GM10248 (cell line): ENCODE measurements at regions of chr9 and their contacts with region 1.

Region 1: DNA sequence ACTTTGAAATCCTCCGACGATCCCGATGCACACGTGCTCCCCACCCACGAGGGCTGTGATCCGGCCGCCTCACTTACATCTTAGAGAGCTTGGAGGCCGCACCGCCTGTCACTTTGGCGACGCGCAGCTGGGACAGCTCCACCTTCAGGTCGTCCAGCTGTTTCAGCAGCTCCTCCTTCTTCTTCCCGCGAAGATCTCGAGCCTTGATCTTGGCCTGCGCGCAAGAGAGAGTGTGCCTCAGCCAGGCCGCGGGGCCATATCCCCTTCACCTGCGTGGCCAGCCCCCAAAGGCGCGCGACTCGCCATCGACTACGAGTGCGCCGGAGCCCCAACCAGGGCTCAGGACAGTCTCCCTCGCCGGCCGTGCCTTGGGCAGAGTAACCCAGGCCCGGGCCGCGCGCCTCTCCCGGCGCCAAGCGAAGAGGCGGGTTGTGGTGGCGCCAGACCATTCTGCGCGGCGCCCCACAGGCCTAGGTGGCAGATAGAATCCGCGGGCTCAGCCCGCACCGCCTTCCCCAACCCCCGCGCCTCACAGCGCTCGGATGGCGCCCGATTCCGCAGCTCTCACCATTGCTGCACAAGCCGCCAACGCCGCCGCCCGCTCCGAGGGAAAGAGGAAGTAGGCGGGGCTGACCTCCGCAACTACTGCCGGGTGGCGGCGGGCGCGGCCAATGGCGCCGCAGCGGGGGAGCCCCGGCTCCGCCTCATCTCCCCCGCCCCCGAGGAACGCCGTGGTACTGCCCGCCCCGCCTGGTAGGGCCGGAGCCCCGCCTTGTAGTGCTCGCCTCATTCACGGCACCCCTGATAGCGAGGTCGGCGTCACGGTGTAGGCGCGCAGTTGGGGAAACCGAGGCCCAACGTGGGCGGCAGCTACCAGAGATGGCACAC is at the starts of genes ARPC5L and RPL35:
- DNase-seq: peak; percentile 99
- CTCF ChIP-seq: no peak

Region 2: DNA sequence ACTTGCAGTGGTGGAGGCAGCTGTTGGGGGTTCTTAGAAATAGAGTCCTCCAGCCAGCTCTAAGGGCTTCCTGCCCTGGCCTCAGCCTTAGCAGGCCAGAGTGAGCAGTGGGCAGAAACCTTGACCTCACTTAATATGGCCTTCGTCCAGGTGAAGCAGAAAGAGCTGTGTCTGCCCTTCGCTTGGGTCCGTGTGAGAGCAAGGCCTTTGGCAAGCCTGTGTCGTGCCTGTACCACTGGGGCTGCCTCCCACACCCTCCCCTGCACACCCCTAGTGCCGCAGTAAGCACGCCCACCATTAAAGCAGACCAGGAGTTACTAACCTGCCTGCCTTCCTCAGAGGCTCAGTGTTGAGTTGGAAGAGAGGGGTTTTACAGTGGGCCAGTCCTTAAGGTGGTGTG is 13.9 kb after region 1 on chr9:
- CTCF ChIA-PET with region 1: interaction called, 12 read pairs
- POLR2A ChIA-PET with region 1: interaction called, 17 read pairs
- DNase-seq: no peak
- CTCF ChIP-seq: no peak

Region 3: DNA sequence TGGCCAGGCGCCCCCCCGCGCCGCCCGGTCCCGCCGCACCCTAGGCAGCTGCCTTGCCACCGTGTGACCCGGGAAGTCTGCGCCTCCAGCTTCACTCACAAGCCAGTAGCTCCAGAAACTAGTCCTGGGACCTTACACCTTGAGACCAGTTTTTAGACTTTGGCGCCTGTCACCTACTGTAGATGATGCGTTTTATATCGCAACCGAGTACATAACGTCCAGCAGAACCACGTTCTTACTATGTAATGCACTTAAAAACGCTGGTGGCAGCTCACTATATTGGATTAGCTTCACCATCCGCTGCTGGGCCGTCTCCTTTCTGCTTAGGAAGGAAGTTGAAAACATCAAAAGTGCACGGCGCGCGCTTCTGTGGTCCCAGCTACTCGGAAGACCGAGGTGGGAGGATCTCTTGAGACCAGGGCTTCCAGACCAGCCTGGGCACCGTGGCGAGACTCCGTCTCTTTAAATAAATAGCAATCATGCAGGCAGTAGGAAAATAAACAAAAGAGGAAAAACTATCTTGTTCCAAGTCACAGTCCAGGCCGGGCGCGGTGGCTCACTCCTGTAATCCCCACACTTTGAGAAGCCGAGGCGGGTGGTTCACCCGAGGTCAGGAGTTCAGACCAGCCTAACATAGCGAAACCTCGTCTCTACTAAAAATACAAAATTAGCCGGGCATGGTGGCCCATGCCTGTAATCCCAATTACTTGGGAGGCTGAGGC is 80.0 kb after region 1 on chr9:
- CTCF ChIA-PET with region 1: no interaction called
- POLR2A ChIA-PET with region 1: no interaction called
- DNase-seq: peak; percentile 32
- CTCF ChIP-seq: no peak

Region 4: GRCh38 chr9:125268394-125269013 is 406.9 kb after region 1 on chr9:
- CTCF ChIA-PET with region 1: no interaction called
- POLR2A ChIA-PET with region 1: interaction called, 15 read pairs
- DNase-seq: no peak
- CTCF ChIP-seq: no peak